Vagina (tissue), 2 donors: ENCODE measurements at regions of chr9 and their contacts with region 1.

Region 1: DNA sequence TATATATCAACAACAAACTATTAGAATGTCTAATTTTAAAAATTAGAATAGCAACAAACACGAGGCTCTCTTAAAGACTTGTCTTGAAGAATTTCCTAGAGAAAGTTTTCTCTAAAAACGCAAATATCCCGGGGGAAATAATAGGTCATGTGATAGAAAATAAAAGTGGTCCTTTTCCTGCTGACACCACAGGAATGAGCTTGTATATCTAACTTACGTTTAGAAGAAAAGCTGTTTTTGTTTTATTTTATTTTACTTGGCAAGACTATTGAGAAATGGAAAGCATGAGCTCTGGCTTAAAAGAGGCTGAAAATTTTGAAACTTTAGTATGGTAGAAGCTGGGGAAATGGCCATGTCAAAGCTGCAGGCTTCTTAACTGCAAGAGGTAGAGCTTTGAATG is 465.0 kb downstream of the AGTPBP1 start:
- DNase-seq: no peak
- H3K4me3 ChIP-seq: no peak overlapping the region
- H3K27ac ChIP-seq: no peak overlapping the region
- H3K4me1 ChIP-seq: peaks cover 9% of the 10 kb centered on the region
- H3K27me3 ChIP-seq: no peaks in the 10 kb centered on the region
- CTCF ChIP-seq: no peak
- POLR2A ChIP-seq: no peak

Region 2: GRCh38 chr9:84978661-84979060 is 298.1 kb before region 1 on chr9:
- intact Hi-C with region 1: no loop called
- DNase-seq: no peak
- H3K4me3 ChIP-seq: no peak overlapping the region
- H3K27ac ChIP-seq: no peak overlapping the region
- H3K4me1 ChIP-seq: no peaks in the 10 kb centered on the region
- H3K27me3 ChIP-seq: no peaks in the 10 kb centered on the region
- CTCF ChIP-seq: no peak
- POLR2A ChIP-seq: no peak

Region 3: GRCh38 chr9:85089188-85089969 is 187.4 kb before region 1 on chr9:
- intact Hi-C with region 1: no loop called
- DNase-seq: no peak
- H3K4me3 ChIP-seq: no peak overlapping the region
- H3K27ac ChIP-seq: no peak overlapping the region
- H3K4me1 ChIP-seq: no peaks in the 10 kb centered on the region
- H3K27me3 ChIP-seq: no peaks in the 10 kb centered on the region
- CTCF ChIP-seq: no peak
- POLR2A ChIP-seq: no peak

Region 4: DNA sequence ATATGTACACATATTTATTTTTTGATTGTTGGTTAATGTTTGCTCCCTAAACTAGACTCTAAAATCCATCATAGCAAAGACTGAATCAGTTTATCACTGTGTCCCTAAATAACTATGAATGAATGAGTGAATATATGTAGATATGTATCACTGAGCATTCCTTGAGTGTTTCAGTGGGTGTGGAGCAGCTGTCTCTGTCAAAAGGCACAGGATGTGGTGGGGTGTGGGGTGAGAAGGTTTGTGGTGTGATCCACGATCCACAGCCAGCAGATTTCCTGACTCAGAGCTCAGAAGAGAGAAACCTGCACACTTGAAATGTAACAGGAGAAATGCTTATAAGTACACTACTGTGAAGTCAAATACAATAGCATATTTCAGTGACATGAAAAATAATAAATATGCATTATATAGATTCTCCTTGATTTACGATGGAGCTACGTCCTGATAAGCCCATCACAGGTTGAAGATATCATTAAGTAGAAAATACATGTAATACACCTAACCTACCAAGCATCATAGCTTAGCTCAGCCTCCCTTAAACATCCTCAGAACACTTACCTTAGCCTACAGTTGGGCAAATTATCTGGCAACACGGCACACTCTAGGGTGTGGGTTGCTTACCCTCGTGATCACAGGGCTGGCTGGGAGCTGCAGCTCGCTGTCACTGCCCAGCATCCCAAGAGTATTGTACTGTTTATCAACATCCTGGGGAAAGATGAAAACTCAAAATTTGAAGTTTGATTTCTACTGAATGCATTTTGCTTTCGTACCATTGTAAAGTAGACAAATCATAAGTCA is 1383.6 kb after region 1 on chr9:
- intact Hi-C with region 1: loop called (anchors 10 kb)
- DNase-seq: no peak
- H3K4me3 ChIP-seq: no peak overlapping the region
- H3K27ac ChIP-seq: no peak overlapping the region
- H3K4me1 ChIP-seq: no peaks in the 10 kb centered on the region
- H3K27me3 ChIP-seq: no peaks in the 10 kb centered on the region
- CTCF ChIP-seq: no peak
- POLR2A ChIP-seq: no peak